AG04449 (cell line): ENCODE measurements at regions of chrX and their contacts with region 1.

Region 1: GRCh38 chrX:19581786-19582185 is 66.5 kb upstream of the MAP3K15 start:
- DNase-seq: no peak
- H3K4me3 ChIP-seq: no peak overlapping the region
- CTCF ChIP-seq: no peak

Region 2: GRCh38 chrX:19593690-19594089 is 11.9 kb after region 1 on chrX:
- CTCF ChIA-PET with region 1: interaction called, 10 read pairs
- POLR2A ChIA-PET with region 1: no interaction called
- DNase-seq: no peak
- H3K4me3 ChIP-seq: no peak overlapping the region
- CTCF ChIP-seq: peak; percentile 11

Region 3: DNA sequence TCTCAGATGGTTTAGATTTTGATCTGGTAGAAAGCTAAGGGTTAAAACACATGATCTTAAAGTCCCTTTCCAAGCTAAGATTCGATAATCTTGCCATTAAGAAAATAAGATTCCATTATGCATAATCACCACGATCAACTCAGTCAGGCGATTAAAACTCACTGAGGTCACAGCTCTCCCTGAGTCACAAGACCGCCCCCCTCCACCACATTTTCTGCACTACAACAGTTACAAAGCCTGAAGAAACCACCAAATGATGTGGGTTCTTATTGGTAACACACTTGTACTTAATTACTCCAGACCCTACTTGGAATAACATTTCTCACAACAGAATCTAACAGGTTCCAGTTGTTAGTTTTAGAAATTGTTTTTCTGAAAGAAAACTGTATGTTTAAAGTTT is 242.8 kb after region 1 on chrX:
- CTCF ChIA-PET with region 1: no interaction called
- POLR2A ChIA-PET with region 1: no interaction called
- DNase-seq: no peak
- H3K4me3 ChIP-seq: no peak overlapping the region
- CTCF ChIP-seq: no peak